ENCODE measurements at regions of chr6 and their contacts with region 1.

Region 1: DNA sequence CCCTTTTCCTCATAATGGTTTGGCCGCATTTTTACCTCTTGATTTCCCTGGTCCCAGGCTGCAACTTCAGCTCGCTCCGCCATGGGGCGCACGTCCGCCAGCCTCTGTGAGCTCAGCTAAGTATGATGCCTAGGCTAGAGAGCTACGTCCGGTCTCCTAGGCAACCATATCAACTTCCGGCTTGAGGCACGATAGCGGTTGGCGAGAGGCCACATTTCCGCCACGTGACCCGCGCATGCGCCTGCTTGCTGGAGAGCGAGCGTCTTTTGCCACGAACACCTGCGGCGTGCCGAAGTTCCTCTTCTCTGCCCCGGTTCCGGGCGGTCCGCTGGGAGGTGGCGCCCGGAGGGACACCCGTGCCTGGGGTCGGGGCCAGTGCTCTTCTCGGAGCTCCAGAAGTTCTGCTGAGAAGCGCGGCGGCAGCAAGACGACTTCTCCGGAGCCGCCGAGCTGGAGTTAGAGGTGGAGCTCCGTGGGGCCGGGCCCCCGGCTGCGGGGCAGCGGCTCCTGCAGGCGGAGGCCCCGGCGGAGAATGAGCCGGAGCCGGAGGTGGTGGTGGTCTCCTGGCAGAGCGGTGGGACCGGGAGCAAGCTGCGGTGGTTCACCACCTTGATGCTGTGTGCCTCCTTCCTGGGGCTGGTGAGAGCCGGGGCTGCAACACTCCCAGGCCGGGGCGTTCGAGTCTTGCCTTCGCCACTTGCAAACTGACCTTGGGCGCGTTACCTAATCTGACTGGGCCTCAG is 172.0 kb downstream of the SLC16A10 start:
- DNase-seq: peak; percentile 99
- H3K4me3 ChIP-seq: peak overlapping the region; percentile 42 to 71
- H3K4me3 Mint-ChIP-seq: peak overlapping the region; percentile 84 to 90 (median 87)
- H3K27ac ChIP-seq: peak overlapping the region; percentile 84
- H3K27ac Mint-ChIP-seq: peak overlapping the region; percentile 87 to 98 (median 96)
- H3K4me1 ChIP-seq: peaks cover 35% of the 10 kb centered on the region
- H3K4me1 Mint-ChIP-seq: peaks cover 16 to 34% (median 23%) of the 10 kb centered on the region in 4 donors
- H3K27me3 ChIP-seq: no peaks in the 10 kb centered on the region
- H3K27me3 Mint-ChIP-seq: peaks cover 3 to 4% of the 10 kb centered on the region in 2 donors

Region 2: GRCh38 chr6:110873981-110874879 is 385.0 kb before region 1 on chr6 and contains the start of gene AMD1:
- CTCF ChIA-PET with region 1: interaction called, 8 read pairs
- POLR2A ChIA-PET with region 1: interaction called, 9 read pairs
- intact Hi-C with region 1: loop called (anchors 10 kb)
- DNase-seq: peak; percentile 96 to 97 (median 97)
- H3K4me3 ChIP-seq: peak within 1 kb of the TSS; percentile 44 to 87
- H3K4me3 Mint-ChIP-seq: peak within 1 kb of the TSS; percentile 96 to 100 (median 99)
- H3K27ac ChIP-seq: peak within 1 kb of the TSS; percentile 87
- H3K27ac Mint-ChIP-seq: peak within 1 kb of the TSS; percentile 94 to 100 (median 99)
- H3K4me1 ChIP-seq: peaks cover 29% of the 10 kb centered on the region
- H3K4me1 Mint-ChIP-seq: peaks cover 28 to 51% (median 32%) of the 10 kb centered on the region in 4 donors
- H3K27me3 ChIP-seq: no peaks in the 10 kb centered on the region
- H3K27me3 Mint-ChIP-seq: no peaks in the 10 kb centered on the region
- total RNA-seq, gene AMD1: 62.2 to 63.1 TPM

Region 3: GRCh38 chr6:111087106-111087835 is 172.0 kb before region 1 on chr6 and contains the start of gene SLC16A10:
- CTCF ChIA-PET with region 1: no interaction called
- POLR2A ChIA-PET with region 1: no interaction called
- intact Hi-C with region 1: loop called (anchors 5 kb)
- DNase-seq: peak; percentile 75 to 82 (median 79)
- H3K4me3 ChIP-seq: peak within 1 kb of the TSS; percentile 62 to 74
- H3K4me3 Mint-ChIP-seq: peak within 1 kb of the TSS; percentile 88 to 99 (median 93)
- H3K27ac ChIP-seq: peak within 1 kb of the TSS; percentile 47
- H3K27ac Mint-ChIP-seq: peak within 1 kb of the TSS; percentile 77 to 92 (median 90)
- H3K4me1 ChIP-seq: peaks cover 22% of the 10 kb centered on the region
- H3K4me1 Mint-ChIP-seq: peaks cover 21 to 37% (median 26%) of the 10 kb centered on the region in 4 donors
- H3K27me3 ChIP-seq: no peaks in the 10 kb centered on the region
- H3K27me3 Mint-ChIP-seq: peaks cover 7 to 15% of the 10 kb centered on the region in 2 donors
- total RNA-seq, gene SLC16A10: 9.8 to 11.2 TPM

Region 4: GRCh38 chr6:111242452-111242851 is 16.8 kb before region 1 on chr6:
- CTCF ChIA-PET with region 1: no interaction called
- POLR2A ChIA-PET with region 1: no interaction called
- intact Hi-C with region 1: no loop called
- DNase-seq: no peak
- H3K4me3 ChIP-seq: no peak overlapping the region
- H3K4me3 Mint-ChIP-seq: no peak overlapping the region
- H3K27ac ChIP-seq: no peak overlapping the region
- H3K27ac Mint-ChIP-seq: no peak overlapping the region
- H3K4me1 ChIP-seq: no peaks in the 10 kb centered on the region
- H3K4me1 Mint-ChIP-seq: no peaks in the 10 kb centered on the region
- H3K27me3 ChIP-seq: peaks cover 5% of the 10 kb centered on the region
- H3K27me3 Mint-ChIP-seq: peaks cover 0 to 2% of the 10 kb centered on the region in 2 donors

Region 5: DNA sequence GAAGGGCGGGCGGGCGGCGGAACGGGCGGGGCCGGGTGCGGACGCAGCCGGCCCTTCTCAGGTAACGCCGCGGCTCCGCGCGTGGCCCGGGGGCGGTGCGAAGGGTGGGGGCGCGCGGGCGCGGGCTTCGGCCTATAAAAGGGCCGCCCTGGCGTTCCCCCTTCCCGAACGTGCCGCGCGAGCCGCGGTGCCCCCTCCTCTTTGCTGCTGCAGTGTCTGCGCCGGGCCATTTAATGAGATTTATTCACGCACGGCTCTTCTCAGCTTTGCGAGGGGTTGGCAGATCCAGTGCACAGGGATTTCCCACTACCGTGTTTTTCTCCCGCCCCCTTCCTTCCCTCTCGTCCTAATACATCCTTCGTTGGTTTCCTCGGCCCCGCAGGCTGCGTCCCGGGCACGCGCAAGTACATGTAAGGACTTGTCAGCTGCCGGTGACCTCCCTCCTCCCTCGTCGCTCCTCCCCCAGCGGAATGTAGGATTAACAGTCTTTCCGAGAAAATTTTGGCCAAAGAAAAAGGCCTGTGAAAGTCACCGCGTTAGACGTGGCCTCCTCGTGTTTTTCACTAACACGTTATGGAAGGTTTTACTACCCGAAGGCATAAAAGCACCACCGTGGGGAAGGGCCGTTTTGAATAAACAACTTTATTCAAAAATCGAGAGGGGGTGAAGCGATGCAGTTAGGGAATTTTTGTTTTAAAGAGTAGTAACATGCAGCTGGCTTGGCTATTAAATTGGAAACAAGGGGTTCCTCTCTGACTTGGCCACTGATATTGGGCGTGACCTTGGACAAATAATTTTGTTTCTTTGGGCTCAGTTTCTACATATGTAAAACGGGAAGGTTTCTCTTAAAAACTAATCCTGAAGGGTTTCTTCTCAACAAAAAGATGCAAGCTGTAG is 224.7 kb after region 1 on chr6:
- CTCF ChIA-PET with region 1: interaction called, 128 read pairs
- POLR2A ChIA-PET with region 1: interaction called, 57 read pairs
- intact Hi-C with region 1: loop called (anchors 1 kb)
- DNase-seq: peak in 3 of 5 donors; percentile 89
- H3K4me3 ChIP-seq: peak overlapping the region; percentile 74
- H3K4me3 Mint-ChIP-seq: peak overlapping the region; percentile 91 to 99 (median 98)
- H3K27ac ChIP-seq: peak overlapping the region; percentile 80
- H3K27ac Mint-ChIP-seq: peak overlapping the region; percentile 97 to 100 (median 98)
- H3K4me1 ChIP-seq: peaks cover 57% of the 10 kb centered on the region
- H3K4me1 Mint-ChIP-seq: peaks cover 33 to 58% (median 45%) of the 10 kb centered on the region in 4 donors
- H3K27me3 ChIP-seq: no peaks in the 10 kb centered on the region
- H3K27me3 Mint-ChIP-seq: peaks cover 0 to 2% of the 10 kb centered on the region in 2 donors

Region 6: DNA sequence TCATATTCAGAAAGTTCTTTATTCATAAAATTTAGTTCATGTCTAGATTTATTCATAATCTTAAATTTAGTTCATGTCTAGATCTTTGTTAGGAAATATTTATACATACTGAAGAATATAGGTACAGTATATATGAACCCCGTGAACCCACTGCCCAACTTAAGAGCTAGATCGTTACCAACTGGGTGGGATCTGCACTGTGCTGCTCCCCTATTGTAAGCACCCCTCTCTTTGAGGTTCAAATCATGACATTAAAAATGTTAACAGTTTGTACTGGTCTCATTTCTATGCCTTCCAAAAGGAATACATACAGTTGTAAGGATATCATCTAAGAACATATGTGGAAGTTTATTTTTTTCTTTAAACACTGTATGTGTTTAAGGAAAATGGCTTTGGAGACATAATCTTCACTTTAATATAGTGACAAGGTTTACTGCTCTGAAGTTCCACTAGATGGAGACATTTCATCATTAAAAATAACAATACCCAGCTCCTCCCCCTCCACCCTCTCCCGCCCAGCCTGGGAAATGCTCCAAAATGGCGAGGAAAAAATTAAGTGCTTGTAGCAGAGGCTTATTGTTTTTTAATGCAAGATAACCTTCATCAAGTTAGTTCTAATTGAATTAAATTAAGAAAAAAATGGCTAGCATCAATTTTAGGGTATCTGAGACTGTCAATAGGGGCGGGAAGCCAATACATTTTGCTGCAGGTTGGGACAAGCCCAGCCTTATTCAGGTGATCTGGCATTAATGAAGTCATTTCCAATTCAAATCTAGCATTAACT is 450.5 kb after region 1 on chr6:
- CTCF ChIA-PET with region 1: interaction called, 15 read pairs
- POLR2A ChIA-PET with region 1: no interaction called
- intact Hi-C with region 1: loop called (anchors 2 kb)
- DNase-seq: peak; percentile 74 to 79 (median 76)
- H3K4me3 ChIP-seq: no peak overlapping the region
- H3K4me3 Mint-ChIP-seq: peak overlapping the region; percentile 26 to 82 (median 44)
- H3K27ac ChIP-seq: peak overlapping the region; percentile 42
- H3K27ac Mint-ChIP-seq: peak overlapping the region; percentile 91 to 97 (median 95)
- H3K4me1 ChIP-seq: peaks cover 51% of the 10 kb centered on the region
- H3K4me1 Mint-ChIP-seq: peaks cover 40 to 60% (median 48%) of the 10 kb centered on the region in 4 donors
- H3K27me3 ChIP-seq: no peaks in the 10 kb centered on the region
- H3K27me3 Mint-ChIP-seq: no peaks in the 10 kb centered on the region

Region 7: DNA sequence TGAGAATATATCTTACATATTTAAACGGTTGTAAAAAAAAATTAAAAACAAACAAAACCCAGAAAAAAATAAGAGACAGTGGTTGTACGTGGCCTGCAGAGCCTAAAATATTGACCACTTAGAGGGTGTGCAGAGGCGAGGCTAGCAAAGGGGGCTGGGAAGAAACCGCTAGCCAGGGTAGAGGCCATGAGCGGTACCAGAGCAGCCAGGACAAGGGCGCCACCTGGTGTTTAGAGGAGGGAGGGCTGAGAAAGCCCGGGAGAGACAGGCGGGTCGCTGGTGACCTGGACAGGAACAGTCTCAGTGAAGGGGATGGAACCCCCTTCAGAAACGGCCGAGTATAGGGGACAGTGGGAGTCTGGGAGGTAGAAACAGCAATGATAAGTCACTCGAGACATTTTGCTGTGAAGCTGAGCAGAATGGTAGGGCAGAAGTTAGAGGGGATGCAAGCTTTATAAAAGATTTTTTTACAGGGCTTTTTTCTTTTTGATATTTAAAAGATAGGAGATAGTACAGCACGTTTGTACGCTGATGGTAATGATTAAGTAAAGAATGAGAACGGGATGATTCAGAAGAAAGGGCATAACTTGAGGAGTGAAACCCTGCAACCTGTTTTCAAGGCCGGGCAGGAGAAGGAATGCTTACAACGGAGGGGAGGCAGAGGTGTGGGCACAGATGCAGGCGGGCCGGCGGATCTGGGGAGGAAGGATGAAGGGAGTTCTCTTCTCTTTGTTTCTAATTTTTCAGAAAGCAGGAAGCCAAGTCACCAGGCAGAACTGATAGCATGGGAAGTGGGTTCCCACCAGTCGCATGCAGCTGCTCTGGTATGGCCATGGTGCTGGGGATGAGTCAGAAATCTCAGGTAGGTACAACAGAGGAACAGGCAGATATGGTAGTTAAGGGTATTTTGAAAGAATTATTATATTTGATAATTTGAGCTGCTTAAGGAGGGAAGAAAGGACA is 904.3 kb after region 1 on chr6:
- CTCF ChIA-PET with region 1: interaction called, 24 read pairs
- POLR2A ChIA-PET with region 1: no interaction called
- intact Hi-C with region 1: loop called (anchors 1 kb)
- DNase-seq: peak; percentile 61 to 69 (median 63)
- H3K4me3 ChIP-seq: no peak overlapping the region
- H3K4me3 Mint-ChIP-seq: peak overlapping the region in 7 of 8 donors; percentile 48 to 86 (median 69)
- H3K27ac ChIP-seq: no peak overlapping the region
- H3K27ac Mint-ChIP-seq: peak overlapping the region in 4 of 7 donors; percentile 44 to 74 (median 63)
- H3K4me1 ChIP-seq: peaks cover 8% of the 10 kb centered on the region
- H3K4me1 Mint-ChIP-seq: peaks cover 4 to 17% (median 14%) of the 10 kb centered on the region in 4 donors
- H3K27me3 ChIP-seq: no peaks in the 10 kb centered on the region
- H3K27me3 Mint-ChIP-seq: peaks cover 41 to 43% of the 10 kb centered on the region in 2 donors

Measured in CD4-positive, alpha-beta memory T cell (primary cell).